ENCODE measurements at regions of chr1 and their contacts with region 1.

Region 1: DNA sequence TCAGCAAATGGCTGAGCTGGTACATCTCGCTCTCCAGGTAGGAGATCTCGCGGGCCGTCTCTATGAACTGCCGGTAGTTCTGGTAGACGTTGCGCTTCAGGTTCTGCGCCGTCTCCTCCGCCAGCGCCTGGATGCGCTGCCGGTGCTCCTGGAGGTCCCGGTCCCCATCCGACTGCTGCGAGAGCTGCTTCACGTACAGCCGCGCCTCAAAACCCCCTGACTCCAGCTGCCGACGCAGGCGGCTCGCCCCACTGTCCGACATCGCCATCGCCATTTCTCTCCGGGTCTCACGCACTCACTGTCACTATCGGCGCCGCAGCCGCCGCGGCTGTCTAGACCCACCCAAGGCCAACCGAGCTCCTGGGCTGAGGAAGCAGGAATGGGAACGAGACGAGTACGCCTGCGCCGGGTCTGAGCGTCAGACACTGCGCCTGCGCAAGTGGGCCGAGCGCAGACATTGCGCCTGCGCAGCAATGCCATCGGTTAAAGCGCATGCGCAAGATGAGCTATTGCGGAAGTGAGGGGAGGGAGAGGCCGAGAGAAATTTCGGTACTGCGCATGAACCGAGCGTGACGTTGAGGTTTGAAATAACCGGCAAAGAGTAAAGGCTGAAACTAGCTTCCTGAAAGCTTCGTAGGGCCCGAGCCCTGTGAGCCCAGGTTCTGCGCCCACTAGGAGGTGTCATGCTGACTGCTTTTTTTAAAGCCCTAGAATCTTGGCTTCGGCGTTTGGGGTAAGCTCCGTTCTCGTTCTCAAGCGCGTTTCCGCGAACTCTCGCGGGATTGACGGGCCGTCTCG is at the start of gene EXOC8:
- DNase-seq: peak; percentile 94 to 98 (median 95)
- ATAC-seq: peak; percentile 95 to 97 (median 96)
- H3K4me3 ChIP-seq: peak within 1 kb of the TSS; percentile 63 to 96 (median 82)
- H3K27ac ChIP-seq: peak within 1 kb of the TSS; percentile 76 to 98 (median 96)
- H3K4me1 ChIP-seq: peaks cover 14 to 63% (median 52%) of the 10 kb centered on the region in 12 donors
- H3K27me3 ChIP-seq: no peaks in the 10 kb centered on the region
- CTCF ChIP-seq: peak in 1 of 12 donors; percentile 11
- POLR2A ChIP-seq: peak in 1 of 2 donors; percentile 93
- total RNA-seq, gene EXOC8: 10.2 to 14.8 (median 12.8) TPM

Region 2: DNA sequence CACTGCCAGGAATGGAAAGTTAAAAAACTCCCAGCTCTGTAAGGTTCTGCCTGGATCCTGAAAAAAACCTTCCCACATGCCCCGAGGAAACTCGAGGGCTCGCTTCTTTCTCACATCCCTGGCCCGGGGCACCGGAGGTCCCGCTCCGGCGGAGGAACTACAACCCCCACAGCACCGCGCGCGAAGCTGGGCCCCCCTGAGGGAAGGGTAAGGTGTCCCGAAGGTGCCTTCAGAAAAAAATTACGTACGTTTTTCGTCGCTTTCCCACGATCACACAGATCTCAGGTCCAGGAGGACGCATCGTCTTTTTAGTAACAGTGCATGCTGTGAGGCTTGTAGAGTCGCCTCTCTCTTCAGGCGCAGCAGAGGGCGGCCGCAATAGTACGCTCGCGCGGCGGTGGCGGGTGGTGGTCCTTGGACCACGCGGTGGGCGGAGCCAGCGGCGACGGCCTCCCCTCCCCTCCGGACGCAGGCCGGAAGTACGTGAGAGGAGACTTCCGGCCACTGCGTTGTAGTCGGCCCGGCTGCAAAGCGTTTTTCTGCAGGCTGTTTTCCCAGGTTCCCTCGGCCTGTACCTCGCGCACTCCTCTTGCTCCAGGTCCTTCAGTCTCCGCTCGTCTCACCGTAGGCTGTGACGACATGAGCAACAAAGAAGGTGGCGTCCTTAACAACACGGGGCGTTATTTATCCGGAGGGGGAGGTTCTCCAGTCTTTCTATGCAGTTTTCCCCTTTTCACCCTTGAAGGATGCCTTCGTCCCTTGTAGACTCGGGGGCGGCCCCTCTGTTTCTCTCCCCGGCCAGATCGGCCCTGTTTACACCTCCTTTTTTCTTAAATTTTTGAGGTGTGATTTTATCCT is 190.7 kb after region 1 on chr1 and contains the start of gene TSNAX:
- intact Hi-C with region 1: loop called in 1 of 10 experiments (anchors 5 kb)
- DNase-seq: peak; percentile 92 to 95 (median 94)
- ATAC-seq: peak; percentile 98 to 99 (median 99)
- H3K4me3 ChIP-seq: peak within 1 kb of the TSS; percentile 38 to 92 (median 76)
- H3K27ac ChIP-seq: peak within 1 kb of the TSS; percentile 89 to 95 (median 92)
- H3K4me1 ChIP-seq: peaks cover under 1 to 58% (median 34%) of the 10 kb centered on the region in 12 donors
- H3K27me3 ChIP-seq: no peaks in the 10 kb centered on the region
- CTCF ChIP-seq: no peak
- POLR2A ChIP-seq: peak in 1 of 2 donors; percentile 86
- total RNA-seq, gene TSNAX: 16.6 to 43.5 (median 31.7) TPM